CD8-positive, alpha-beta T cell (primary cell): ENCODE measurements at regions of chr14 and their contacts with region 1.

Region 1: GRCh38 chr14:42335918-42336317 is 729.2 kb downstream of the LRFN5 start:
- DNase-seq: no peak
- ATAC-seq: no peak
- H3K4me3 ChIP-seq: no peak overlapping the region
- H3K4me3 Mint-ChIP-seq: no peak overlapping the region
- H3K27ac ChIP-seq: no peak overlapping the region
- H3K27ac Mint-ChIP-seq: no peak overlapping the region
- H3K4me1 ChIP-seq: no peaks in the 10 kb centered on the region
- H3K4me1 Mint-ChIP-seq: no peaks in the 10 kb centered on the region
- H3K27me3 ChIP-seq: no peaks in the 10 kb centered on the region
- H3K27me3 Mint-ChIP-seq: no peaks in the 10 kb centered on the region
- CTCF ChIP-seq: no peak

Region 2: GRCh38 chr14:41541333-41541732 is 794.6 kb before region 1 on chr14:
- CTCF ChIA-PET with region 1: no interaction called
- POLR2A ChIA-PET with region 1: no interaction called
- intact Hi-C with region 1: loop called in 1 of 2 experiments (anchors 5 kb)
- DNase-seq: no peak
- ATAC-seq: no peak
- H3K4me3 ChIP-seq: no peak overlapping the region
- H3K4me3 Mint-ChIP-seq: no peak overlapping the region
- H3K27ac ChIP-seq: no peak overlapping the region
- H3K27ac Mint-ChIP-seq: no peak overlapping the region
- H3K4me1 ChIP-seq: no peaks in the 10 kb centered on the region
- H3K4me1 Mint-ChIP-seq: no peaks in the 10 kb centered on the region
- H3K27me3 ChIP-seq: no peaks in the 10 kb centered on the region
- H3K27me3 Mint-ChIP-seq: no peaks in the 10 kb centered on the region
- CTCF ChIP-seq: no peak